Right ventricle myocardium inferior (tissue), 1 donor: ENCODE measurements at regions of chr3 and their contacts with region 1.

Region 1: DNA sequence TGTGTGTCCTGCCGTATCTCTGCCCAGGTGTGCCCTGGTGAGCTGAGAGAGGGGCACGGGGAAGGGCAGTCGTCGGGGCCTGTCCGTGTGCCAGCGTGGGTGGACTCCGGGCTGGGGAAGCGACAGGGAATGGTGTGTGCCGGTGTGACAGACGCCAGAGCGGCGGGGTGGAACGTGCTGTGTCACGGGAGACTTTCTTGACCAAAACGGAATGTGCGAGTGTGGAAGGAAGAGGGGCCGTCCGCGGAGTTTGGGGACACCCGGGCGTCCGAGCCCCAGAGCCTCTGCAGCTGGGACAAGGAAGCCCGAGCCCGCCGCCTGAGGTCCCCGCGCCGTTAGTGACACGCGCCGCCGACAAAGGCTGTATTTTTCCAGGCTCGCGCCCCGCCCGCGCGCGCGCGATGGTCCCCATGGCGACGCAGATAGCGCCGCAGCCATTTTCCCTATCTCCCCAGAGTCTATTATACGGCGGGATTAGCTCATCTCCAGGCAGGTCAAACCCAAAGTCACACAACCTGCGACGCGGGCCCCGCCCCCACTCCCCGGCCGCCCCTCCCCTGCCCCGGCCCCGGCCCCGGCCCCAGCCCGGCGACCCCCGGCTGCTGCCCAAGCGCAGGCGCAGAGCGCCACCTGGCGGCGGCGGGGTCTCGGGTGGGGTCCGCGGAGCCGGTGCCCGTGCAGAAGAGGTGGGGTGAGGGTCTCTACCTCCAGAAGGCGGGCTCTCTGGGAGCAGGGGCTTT is 4.6 kb upstream of the GATA2 start:
- DNase-seq: peak; percentile 82
- ATAC-seq: peak; percentile 60

Region 2: DNA sequence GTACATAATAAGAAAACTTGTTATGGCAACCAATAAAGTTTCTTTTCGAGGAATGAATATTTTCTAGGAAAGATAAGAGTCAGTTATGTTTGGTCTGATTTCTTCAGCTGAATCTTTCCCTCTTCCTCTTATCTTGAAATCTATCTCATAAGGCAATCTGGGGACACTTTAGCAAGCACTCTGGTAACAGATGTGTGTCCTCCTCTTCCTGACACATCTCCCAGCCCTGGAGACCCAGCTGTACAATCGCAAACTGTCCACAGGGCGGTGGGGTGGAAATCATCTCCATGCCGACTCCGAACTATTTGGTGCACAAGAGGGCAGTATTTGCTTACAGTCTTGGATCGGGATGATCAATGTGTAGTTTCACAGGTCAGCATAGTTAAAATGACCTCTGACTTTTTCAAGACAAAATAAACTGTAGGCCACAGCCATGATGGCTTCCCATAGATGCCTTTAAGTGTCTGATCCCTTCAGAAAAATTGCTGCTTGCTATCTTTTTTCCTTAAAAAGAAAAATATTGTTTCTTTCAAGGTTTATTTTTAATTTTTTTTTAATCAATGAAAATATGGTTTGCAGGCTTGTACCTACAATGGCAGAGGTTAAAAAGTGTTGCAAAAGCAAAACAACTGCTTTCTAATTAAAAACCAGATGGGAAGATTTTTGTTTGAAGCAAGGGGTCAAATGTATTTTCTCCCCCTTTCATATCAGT is 326.6 kb before region 1 on chr3:
- intact Hi-C with region 1: loop called (anchors 2 kb)
- DNase-seq: no peak
- ATAC-seq: peak; percentile 69

Region 3: DNA sequence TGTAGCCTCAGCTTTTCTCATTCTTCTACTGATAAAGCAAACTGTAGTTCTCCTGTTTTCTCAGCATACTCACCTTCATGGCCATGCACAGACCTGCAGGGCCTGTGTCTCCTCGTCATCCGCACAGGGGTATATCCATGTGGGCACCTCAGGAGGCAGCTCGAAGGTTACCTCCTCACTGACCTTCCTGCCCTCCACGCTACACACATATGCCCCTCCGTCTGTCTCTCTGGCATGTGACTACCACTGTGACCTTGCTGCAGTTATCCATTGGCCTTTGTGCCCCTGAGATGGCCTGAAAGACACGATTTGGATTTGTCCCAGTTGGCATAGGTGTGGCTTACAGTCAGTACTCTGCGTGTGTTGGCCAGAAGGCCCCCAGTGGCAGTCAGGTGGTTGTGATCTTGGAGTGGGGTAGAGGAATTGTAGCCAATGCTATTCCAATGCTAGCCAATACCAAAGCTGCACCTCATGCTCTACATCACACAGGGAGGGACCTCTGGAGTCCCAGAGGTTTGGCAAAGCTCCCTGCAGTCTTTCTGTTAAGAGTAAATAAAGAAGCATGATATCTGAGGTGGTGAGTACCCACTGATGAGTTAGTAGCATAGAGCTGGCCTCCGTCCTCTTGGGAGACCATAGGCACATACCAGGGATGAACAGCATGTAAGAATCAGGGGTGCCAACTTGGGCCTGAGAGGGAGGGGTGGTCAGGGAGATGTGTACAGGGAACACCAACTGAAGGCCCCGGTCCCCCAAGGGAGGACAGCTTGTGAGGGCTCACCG is 200.9 kb before region 1 on chr3:
- intact Hi-C with region 1: no loop called
- DNase-seq: no peak
- ATAC-seq: peak; percentile 89

Region 4: GRCh38 chr3:128307029-128307633 is 190.4 kb before region 1 on chr3:
- intact Hi-C with region 1: loop called (anchors 5 kb)
- DNase-seq: no peak
- ATAC-seq: no peak

Region 5: DNA sequence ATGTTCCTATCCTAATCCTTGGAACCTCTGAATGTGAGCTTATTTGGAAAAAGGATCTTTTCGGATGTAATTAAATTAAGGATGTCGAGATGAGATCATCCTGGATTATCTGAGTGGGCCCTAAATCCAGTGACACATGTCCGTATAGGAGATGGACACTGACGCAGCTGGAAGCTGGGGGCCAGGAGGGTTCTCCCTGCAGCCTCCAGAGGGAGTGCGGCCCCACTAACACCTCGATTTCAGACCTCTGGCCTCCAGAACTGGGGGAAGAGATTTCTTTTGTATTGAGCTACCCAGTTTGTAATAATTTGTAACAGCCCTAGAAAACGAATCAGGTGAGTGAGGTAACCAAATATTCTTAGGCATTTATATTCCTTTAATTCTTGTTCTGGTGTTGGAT is 33.4 kb before region 1 on chr3:
- intact Hi-C with region 1: loop called (anchors 2 kb)
- DNase-seq: no peak
- ATAC-seq: no peak